ENCODE measurements at regions of chr6 and their contacts with region 1.

Region 1: GRCh38 chr6:89352278-89353117 is at the start of gene UBE2J1:
- DNase-seq: peak; percentile 98 to 99
- ATAC-seq: peak; percentile 98
- H3K4me3 ChIP-seq: peak within 1 kb of the TSS; percentile 64 to 99
- H3K27ac ChIP-seq: peak within 1 kb of the TSS; percentile 88 to 100
- H3K4me1 ChIP-seq: peaks cover 0 to 1% of the 10 kb centered on the region in 2 donors
- H3K27me3 ChIP-seq: no peaks in the 10 kb centered on the region
- total RNA-seq, gene UBE2J1: 34.1 to 38.7 TPM

Region 2: GRCh38 chr6:89290401-89291155 is 61.9 kb before region 1 on chr6:
- intact Hi-C with region 1: no loop called
- DNase-seq: no peak
- ATAC-seq: no peak
- H3K4me3 ChIP-seq: no peak overlapping the region
- H3K27ac ChIP-seq: no peak overlapping the region
- H3K4me1 ChIP-seq: no peaks in the 10 kb centered on the region
- H3K27me3 ChIP-seq: no peaks in the 10 kb centered on the region

Region 3: DNA sequence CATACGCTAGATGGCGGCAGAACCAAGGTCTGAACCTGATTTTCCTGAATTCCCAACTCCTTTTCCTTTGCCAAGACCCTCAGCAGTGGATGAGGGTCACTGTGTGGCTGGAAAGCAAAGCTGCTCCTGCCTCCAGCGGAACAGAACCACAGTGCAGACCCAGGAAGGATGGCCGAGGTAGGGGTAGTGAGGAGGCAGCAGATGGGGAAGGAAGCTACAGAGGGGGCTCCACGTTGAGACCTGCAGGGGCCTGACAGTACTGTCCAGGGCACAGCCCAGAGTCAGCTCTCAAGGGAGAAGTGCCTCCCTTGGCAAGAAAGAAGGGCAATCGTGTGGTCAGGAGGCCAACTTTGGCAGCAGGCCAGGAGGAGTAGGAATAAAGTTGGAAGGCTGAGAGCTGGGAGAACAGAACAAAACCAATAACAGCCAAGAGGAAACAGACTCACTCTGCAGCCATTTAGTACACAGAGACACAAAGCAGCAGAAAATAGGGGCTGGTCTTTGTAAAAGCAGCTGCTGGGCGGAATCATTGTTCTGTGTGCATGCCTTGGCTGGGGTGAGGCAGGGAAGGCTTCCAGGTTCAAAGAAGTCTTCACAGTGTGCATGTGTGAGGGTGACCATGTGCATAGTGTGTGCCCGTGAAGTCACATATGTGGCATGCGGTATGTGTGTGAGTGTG is 40.5 kb before region 1 on chr6:
- intact Hi-C with region 1: loop called in 1 of 2 experiments (anchors 5 kb)
- DNase-seq: peak; percentile 84 to 88
- ATAC-seq: peak; percentile 78
- H3K4me3 ChIP-seq: no peak overlapping the region
- H3K27ac ChIP-seq: peak overlapping the region in 1 of 2 donors; percentile 21
- H3K4me1 ChIP-seq: no peaks in the 10 kb centered on the region
- H3K27me3 ChIP-seq: no peaks in the 10 kb centered on the region

Measured in aorta (tissue), 5 donors.